OCI-LY7 (cell line): ENCODE measurements at regions of chr6 and their contacts with region 1.

Region 1: DNA sequence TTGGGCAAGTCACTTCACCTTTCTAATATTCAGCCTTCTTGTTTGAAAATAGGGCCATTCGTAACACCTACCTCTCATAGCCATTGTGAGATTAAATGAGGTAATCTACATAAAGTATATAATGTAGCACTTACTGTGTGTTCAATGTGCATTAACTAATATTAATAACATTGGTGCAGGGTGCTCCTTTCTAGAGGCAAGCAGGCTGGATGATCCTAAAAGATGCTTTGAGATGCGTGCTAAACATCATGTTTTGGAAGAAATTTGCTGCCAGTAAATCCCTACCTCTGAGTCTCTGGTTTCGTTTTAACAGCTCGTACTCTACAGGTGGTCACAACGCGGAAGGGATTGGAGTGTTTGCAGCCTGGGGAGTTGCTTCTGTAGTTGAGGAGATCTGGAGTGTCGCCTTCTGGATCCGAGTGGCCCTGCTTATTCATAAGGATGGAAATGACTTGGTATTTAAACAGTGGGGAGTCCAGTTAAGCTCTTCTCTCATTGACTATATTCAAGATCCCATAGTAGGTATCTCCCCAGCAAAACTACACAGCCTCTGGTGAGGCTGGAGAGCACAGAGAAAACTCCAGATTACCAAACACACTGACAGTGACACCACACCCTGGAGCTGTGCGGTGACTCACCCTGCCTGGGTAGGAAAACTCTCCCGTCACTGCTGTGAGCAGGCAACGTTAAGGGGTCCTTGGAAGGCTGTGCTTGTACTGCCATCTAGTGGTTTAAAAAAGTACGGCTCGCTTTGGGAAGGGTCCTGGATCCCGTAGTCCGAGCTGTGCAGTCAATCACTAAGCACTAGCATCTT is 107.9 kb downstream of the MAP3K7 start:
- DNase-seq: peak; percentile 86
- H3K4me3 ChIP-seq: no peak overlapping the region
- H3K27ac ChIP-seq: no peak overlapping the region
- H3K4me1 ChIP-seq: peaks cover 26% of the 10 kb centered on the region
- CTCF ChIP-seq: peak; percentile 95

Region 2: GRCh38 chr6:89927791-89928550 is 551.0 kb before region 1 on chr6:
- CTCF ChIA-PET with region 1: no interaction called
- POLR2A ChIA-PET with region 1: no interaction called
- intact Hi-C with region 1: loop called (anchors 5 kb)
- DNase-seq: no peak
- H3K4me3 ChIP-seq: no peak overlapping the region
- H3K27ac ChIP-seq: no peak overlapping the region
- H3K4me1 ChIP-seq: no peaks in the 10 kb centered on the region
- CTCF ChIP-seq: no peak

Region 3: DNA sequence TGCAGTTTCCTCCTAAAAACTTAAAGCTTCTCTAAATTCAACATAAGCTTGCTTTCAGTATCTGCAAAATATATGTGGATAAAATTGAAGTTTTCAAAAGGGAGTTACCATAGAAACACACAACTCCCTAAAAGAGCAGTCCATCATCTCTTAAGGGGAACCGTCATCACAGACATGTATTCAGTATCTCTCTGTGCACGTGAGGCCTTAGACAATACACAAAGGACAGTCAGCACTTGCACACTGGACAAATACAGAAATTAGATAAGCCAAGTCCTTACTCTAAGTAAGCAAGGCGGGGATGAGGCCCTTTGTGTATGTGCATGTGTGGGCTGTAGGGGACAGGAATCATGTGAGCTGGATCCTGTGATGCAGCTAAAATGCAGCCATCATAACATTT is 319.0 kb before region 1 on chr6:
- CTCF ChIA-PET with region 1: no interaction called
- POLR2A ChIA-PET with region 1: interaction called, 3 read pairs
- intact Hi-C with region 1: loop called (anchors 5 kb)
- DNase-seq: no peak
- H3K4me3 ChIP-seq: no peak overlapping the region
- H3K27ac ChIP-seq: no peak overlapping the region
- H3K4me1 ChIP-seq: peaks cover 4% of the 10 kb centered on the region
- CTCF ChIP-seq: no peak

Region 4: DNA sequence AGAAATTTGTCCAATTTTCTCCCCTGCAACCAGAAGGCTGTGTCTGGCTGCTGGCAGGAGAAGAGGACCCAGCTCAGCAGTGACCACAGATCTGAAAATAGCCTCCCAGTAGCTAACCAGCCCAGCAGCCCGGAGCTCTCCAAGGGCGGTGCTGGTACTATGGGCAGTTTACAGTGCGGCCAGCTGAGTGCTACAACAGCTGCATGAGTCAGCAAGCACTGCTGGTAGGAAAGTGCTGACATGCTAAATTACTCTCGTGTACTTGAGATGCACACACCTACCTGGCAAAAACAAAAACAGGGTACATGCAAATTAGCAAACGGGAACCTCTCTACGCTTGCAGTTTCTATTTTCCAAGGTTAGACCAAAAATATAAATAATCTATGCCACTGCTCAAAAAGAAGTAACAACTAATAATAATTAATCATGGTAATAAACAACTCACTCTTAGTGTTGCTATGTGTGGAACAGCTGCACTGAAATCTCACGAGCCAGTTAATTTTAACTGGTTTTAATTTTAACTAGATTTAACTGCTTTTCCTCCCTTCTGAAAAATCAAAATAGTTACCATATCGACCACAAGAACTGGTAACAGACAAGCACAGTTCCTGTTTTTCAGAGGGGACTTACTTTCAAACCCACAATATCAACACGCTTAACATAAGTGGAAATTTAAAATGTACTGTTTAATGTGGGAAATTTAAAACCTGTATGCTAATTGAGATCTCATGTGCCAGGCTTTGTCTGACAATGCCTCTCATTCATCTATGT is 193.2 kb before region 1 on chr6:
- CTCF ChIA-PET with region 1: interaction called, 4 read pairs
- POLR2A ChIA-PET with region 1: interaction called, 7 read pairs
- intact Hi-C with region 1: loop called (anchors 1 kb)
- DNase-seq: peak; percentile 73
- H3K4me3 ChIP-seq: peak overlapping the region; percentile 65
- H3K27ac ChIP-seq: peak overlapping the region; percentile 84
- H3K4me1 ChIP-seq: peaks cover 93% of the 10 kb centered on the region
- CTCF ChIP-seq: no peak

Region 5: GRCh38 chr6:90393232-90393884 is 85.6 kb before region 1 on chr6:
- CTCF ChIA-PET with region 1: interaction called, 5 read pairs
- POLR2A ChIA-PET with region 1: interaction called, 3 read pairs
- intact Hi-C with region 1: loop called (anchors 2 kb)
- DNase-seq: peak; percentile 93
- H3K4me3 ChIP-seq: peak overlapping the region; percentile 18
- H3K27ac ChIP-seq: peak overlapping the region; percentile 71
- H3K4me1 ChIP-seq: peaks cover 67% of the 10 kb centered on the region
- CTCF ChIP-seq: peak; percentile 97

Region 6: DNA sequence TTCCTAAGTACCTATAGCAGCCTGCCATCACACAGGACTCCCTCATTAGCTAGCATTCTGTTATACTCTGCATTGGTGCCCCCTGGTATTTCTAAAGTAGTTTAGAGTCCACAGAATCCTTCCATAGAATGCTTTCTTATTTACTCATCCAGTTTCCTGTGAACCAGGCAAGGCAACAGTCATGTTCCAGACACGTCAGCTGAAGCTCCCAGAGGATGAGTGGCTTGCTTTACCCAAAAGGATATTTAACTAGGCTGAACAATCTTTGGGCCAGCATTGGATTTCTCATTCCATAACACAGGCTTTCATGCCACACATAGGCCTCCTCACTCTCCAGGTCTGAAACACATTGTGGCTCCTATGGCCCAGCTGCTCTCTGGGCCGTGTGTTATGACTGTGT is 311.7 kb after region 1 on chr6:
- CTCF ChIA-PET with region 1: no interaction called
- POLR2A ChIA-PET with region 1: no interaction called
- intact Hi-C with region 1: no loop called
- DNase-seq: no peak
- H3K4me3 ChIP-seq: no peak overlapping the region
- H3K27ac ChIP-seq: no peak overlapping the region
- H3K4me1 ChIP-seq: no peaks in the 10 kb centered on the region
- CTCF ChIP-seq: no peak